Activated CD8-positive, alpha-beta memory T cell treated with anti-CD3 and anti-CD28 coated beads, Interleukin-2, amount 10 ng/mL, durations not matched to agents 7 days and 5 days (primary cell): ENCODE measurements at regions of chr16 and their contacts with region 1.

Region 1: DNA sequence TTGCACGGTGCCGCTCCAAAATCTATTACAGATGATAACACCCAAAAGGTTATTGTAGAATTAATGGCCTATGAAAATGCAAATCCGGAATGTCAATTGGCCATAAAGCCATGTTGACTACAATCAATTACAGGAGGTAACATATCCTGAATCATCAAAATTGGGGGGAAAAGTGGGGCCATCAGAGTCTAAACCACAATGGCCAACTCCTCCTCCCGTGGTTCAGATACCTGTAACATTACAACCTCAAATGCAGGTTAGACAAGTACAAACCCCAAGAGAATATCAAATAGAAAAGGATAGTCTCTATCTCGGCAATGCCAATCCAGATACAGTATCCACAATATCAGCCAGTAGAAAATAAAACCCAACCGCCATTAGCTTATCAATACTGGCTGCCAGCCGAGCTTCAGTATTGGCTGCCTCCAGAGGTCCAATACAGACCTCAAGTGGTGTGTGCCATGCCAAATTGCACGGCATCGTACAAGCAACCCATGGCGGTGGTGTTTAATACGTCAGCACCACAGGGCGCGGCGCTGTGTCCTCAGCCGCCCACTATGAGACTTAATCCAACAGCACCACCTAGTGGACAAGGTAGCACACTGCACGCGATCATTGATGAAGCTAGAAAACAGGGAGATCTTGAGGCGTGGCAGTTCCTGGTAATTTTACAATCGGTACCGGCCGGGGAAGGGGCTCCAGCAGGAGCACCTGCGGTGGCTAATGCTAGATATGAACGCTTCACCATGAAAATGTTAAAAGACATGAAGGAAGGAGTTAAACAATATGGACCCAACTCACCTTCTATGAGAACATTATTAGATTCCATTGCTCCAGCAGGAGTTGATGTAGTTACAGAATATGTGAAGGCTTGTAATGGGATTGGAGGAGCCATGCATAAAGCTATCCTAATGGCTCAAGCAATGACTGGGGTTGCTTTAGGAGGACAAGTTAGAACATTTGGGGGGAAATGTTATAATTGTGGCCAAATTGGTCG is 15.2 kb downstream of the FLYWCH1 start:
- DNase-seq: peak; percentile 93
- ATAC-seq: peak; percentile 99
- H3K4me3 Mint-ChIP-seq: no peak overlapping the region
- H3K27ac Mint-ChIP-seq: no peak overlapping the region
- H3K4me1 Mint-ChIP-seq: peaks cover 13% of the 10 kb centered on the region
- H3K27me3 Mint-ChIP-seq: no peaks in the 10 kb centered on the region

Region 2: DNA sequence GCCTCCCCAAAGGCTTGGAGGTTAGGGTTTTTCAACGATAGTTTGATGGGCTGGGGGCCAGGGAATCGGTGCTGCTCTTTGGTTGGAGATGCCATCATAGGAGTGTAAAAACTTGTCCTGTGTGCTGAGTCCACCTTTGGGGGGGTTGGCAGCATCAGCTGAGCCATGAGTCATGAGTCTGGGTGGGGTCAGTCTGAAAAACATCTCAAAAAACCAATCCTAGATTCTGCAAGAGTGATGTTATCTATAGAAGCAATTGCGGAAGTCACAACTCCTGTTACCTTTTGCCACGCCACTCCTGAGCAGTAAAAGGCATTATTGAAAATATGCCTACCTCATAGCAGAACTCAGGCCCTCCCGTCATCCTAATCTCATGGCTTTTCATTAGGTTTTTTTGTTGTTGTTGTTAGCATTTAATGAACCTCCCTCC is 131.2 kb before region 1 on chr16:
- CTCF ChIA-PET with region 1: no interaction called
- DNase-seq: no peak
- ATAC-seq: no peak
- H3K4me3 Mint-ChIP-seq: no peak overlapping the region
- H3K27ac Mint-ChIP-seq: no peak overlapping the region
- H3K4me1 Mint-ChIP-seq: no peaks in the 10 kb centered on the region
- H3K27me3 Mint-ChIP-seq: peaks cover 34% of the 10 kb centered on the region

Region 3: DNA sequence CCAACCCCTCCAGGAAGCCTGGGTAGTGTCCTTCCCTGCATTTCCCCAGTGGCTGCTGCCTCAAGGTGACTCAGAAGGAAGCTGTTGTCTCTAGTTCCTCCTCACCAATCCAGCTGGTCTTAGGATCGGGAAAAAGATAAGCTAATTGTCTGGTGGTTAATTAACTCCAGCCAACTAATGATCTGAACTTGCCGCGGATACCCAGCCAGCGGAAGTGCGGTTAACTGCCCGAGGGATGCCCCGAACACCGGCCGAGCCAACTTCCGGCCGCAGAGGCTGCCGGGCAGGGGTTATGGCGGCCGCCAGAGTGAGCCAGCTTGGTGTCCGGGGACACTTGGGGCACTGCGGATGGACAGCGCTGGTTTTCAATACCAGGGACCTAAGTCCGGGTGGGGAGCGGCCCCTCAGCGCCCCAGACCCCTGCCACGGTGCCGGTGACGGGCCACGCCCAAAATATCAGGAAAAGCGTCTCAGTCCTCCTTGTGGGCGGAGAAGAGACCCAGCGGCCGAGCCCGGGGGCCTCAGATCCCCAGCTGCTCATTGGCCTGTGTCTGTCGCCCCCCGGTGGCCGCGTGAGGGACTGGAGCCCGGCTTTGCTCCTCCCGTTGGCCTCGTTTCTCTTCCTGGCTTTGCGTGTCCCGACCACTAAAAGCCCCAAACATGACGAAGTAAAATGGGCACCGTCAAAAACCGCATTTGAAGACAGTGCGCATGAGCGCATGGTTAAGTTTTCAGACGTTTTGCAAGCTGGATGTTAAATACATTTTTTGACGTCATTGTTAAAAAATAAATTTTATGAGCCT is 58.8 kb before region 1 on chr16:
- CTCF ChIA-PET with region 1: interaction called, 23 read pairs
- DNase-seq: peak; percentile 98
- ATAC-seq: peak; percentile 96
- H3K4me3 Mint-ChIP-seq: peak overlapping the region; percentile 83
- H3K27ac Mint-ChIP-seq: peak overlapping the region; percentile 91
- H3K4me1 Mint-ChIP-seq: peaks cover 13% of the 10 kb centered on the region
- H3K27me3 Mint-ChIP-seq: peaks cover 3% of the 10 kb centered on the region

Region 4: DNA sequence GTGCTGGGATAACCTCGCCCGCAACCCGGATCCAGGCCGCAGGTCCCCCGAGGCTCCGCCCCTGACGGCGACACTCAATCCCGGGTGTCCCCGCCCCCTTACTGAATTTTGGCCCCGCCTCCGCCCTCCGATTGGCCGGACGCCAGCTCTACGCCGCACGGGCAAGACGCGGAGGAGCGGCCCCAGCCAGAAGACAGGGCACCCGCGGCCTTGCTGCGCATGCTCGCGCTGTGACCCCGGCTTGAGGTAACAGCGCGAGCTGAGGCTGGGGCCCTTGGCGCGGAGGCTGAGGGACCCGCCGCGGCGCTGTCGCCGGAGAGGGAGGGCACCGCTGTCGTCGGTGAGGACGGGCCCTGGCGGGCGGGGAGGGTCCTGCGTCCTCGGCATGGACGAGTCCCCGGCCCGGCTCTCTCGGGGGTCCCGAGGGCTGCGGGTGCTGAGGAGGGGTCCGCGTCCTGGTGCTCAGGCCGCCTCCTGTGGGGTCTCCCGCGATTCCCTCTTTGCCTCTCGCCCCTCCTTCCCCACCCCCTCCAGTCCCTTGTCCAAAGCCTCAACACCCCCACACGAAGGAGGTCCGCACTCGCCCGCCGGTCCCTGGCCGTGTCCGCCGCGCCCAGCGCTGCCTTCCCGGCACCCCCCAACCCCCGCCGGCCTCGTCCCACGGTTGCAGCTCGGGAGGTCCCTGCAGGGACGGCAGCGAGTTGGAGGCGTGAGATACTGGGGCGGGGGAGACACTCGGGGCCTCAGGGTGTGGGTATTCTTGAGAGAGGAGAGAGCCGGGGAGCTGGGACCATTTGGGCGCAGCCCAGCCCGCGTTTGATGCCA is 43.7 kb before region 1 on chr16 and contains the start of gene FLYWCH2:
- CTCF ChIA-PET with region 1: interaction called, 30 read pairs
- DNase-seq: peak; percentile 99
- ATAC-seq: peak; percentile 84
- H3K4me3 Mint-ChIP-seq: peak within 1 kb of the TSS; percentile 87
- H3K27ac Mint-ChIP-seq: peak within 1 kb of the TSS; percentile 94
- H3K4me1 Mint-ChIP-seq: peaks cover 17% of the 10 kb centered on the region
- H3K27me3 Mint-ChIP-seq: no peaks in the 10 kb centered on the region
- total RNA-seq, gene FLYWCH2: 19.6 to 19.7 TPM

Region 5: GRCh38 chr16:2905431-2906387 is 21.2 kb before region 1 on chr16:
- CTCF ChIA-PET with region 1: interaction called, 32 read pairs
- DNase-seq: peak; percentile 99
- ATAC-seq: peak; percentile 81
- H3K4me3 Mint-ChIP-seq: peak overlapping the region; percentile 94
- H3K27ac Mint-ChIP-seq: peak overlapping the region; percentile 91
- H3K4me1 Mint-ChIP-seq: peaks cover 22% of the 10 kb centered on the region
- H3K27me3 Mint-ChIP-seq: peaks cover 5% of the 10 kb centered on the region

Region 6: GRCh38 chr16:2942045-2942444 is 15.1 kb after region 1 on chr16:
- CTCF ChIA-PET with region 1: interaction called, 20 read pairs
- DNase-seq: no peak
- ATAC-seq: no peak
- H3K4me3 Mint-ChIP-seq: no peak overlapping the region
- H3K27ac Mint-ChIP-seq: no peak overlapping the region
- H3K4me1 Mint-ChIP-seq: no peaks in the 10 kb centered on the region
- H3K27me3 Mint-ChIP-seq: no peaks in the 10 kb centered on the region